A673 (cell line): ENCODE measurements at regions of chr14 and their contacts with region 1.

Region 1: DNA sequence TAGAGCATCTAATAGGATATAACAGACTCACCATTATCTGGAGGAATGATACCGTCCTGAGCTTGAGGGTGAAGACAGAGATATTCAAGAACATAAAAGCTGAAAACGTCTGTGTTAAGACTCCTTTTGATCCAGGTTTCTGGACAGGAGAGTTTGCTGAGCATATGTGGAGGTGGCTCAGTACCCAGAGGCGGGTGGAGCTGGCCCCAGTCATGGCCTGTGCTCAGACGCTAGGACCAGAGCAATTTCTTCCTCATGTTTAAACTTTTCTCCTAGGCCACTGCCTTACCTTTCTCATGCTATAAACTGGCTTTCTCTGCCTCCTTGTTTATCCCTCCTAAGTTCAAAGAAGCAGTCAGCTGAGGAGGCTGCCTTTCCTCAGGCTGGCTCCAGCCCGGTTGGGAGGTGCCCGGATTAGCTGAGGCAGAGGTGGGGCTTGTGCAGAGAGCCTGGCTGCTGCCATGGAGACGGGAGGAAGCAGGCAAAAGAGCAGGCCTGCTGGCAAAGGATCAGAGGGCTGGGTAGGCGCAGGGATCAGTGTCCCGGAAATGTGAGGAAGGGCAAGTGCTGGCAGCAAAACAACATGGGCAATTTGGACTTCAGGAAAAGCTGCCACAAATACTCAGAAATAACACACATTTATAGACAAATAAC is 13.7 kb downstream of the COA8 start:
- DNase-seq: peak; percentile 93
- H3K4me3 ChIP-seq: no peak overlapping the region
- H3K27ac ChIP-seq: no peak overlapping the region
- H3K4me1 ChIP-seq: peaks cover 14% of the 10 kb centered on the region
- H3K27me3 ChIP-seq: no peaks in the 10 kb centered on the region
- CTCF ChIP-seq: no peak

Region 2: DNA sequence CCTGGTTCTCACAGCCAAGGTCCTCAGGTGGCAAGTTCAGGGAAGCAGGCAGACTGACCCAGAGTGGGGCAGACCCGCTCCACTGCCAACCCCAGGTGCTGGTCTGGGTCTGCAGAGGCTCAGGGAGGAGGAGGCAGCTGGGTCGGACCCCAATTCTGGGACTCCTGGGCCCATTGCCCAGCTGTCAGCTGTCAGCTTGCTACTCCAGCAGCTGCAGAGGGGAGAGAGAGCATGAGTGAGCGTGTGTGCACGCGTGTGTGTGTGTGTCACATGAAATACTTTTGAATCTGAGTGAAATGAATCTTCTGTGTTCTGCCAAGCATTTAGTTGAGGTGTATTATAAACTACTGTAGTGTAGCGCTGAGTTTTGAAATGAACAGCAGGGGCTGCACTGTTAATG is 108.0 kb after region 1 on chr14:
- CTCF ChIA-PET with region 1: interaction called, 3 read pairs
- POLR2A ChIA-PET with region 1: no interaction called
- intact Hi-C with region 1: loop called (anchors 5 kb)
- DNase-seq: no peak
- H3K4me3 ChIP-seq: no peak overlapping the region
- H3K27ac ChIP-seq: no peak overlapping the region
- H3K4me1 ChIP-seq: no peaks in the 10 kb centered on the region
- H3K27me3 ChIP-seq: no peaks in the 10 kb centered on the region
- CTCF ChIP-seq: no peak

Region 3: DNA sequence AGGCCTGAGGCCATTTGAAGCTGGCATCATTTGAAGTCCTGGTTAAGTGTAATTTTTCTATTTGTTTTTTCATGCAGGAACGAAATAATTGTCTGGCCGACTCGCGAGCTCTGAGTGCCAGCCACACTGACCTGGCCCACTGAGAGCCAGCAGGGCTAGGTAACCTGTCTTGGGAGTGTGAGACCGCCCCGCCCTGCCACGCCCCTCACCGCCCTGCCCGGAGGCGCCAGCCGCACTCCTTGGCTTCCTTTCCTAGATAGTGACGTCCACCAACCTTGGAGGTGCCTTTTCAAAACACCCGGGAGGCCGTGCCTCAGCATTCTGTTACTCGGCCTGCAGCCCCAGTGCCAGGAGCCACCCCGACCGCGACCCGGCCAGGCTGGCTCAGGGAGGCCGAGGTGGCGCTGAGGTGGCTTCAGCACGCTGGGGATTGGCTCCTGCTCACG is 117.0 kb after region 1 on chr14:
- CTCF ChIA-PET with region 1: interaction called, 12 read pairs
- POLR2A ChIA-PET with region 1: no interaction called
- intact Hi-C with region 1: no loop called
- DNase-seq: no peak
- H3K4me3 ChIP-seq: no peak overlapping the region
- H3K27ac ChIP-seq: no peak overlapping the region
- H3K4me1 ChIP-seq: peaks cover 26% of the 10 kb centered on the region
- H3K27me3 ChIP-seq: no peaks in the 10 kb centered on the region
- CTCF ChIP-seq: no peak

Region 4: GRCh38 chr14:103989964-103990363 is 413.5 kb after region 1 on chr14:
- CTCF ChIA-PET with region 1: no interaction called
- POLR2A ChIA-PET with region 1: no interaction called
- intact Hi-C with region 1: loop called (anchors 10 kb)
- DNase-seq: no peak
- H3K4me3 ChIP-seq: no peak overlapping the region
- H3K27ac ChIP-seq: no peak overlapping the region
- H3K4me1 ChIP-seq: no peaks in the 10 kb centered on the region
- H3K27me3 ChIP-seq: peaks cover 6% of the 10 kb centered on the region
- CTCF ChIP-seq: no peak

Region 5: DNA sequence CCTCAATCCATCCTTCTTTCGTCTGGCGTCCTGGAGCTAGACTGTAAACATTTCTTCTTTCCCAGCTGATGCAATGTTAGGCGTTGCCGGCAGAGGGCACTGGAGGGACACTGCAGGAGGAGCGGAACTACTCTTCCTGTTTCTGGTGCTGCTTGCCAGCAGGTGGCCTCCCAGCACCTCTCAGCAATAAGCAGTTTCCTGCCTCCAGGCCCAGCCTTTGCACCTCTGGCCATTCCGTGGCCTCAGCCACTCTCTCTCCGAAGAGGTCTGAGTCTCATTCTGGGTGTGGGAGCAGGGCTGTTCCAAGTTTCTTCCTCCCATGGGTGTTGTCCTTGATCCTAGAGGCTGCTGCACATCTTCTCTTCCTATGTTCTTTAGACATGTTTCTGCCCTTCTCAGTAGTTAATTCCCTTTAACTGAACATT is 501.5 kb after region 1 on chr14:
- CTCF ChIA-PET with region 1: no interaction called
- POLR2A ChIA-PET with region 1: no interaction called
- intact Hi-C with region 1: no loop called
- DNase-seq: peak; percentile 91
- H3K4me3 ChIP-seq: no peak overlapping the region
- H3K27ac ChIP-seq: no peak overlapping the region
- H3K4me1 ChIP-seq: no peaks in the 10 kb centered on the region
- H3K27me3 ChIP-seq: no peaks in the 10 kb centered on the region
- CTCF ChIP-seq: peak; percentile 100